ENCODE measurements at regions of chr15 and their contacts with region 1.

Region 1: GRCh38 chr15:97909291-97909891 is 51.1 kb upstream of the ARRDC4 start:
- DNase-seq: peak in 3 of 5 donors; percentile 34 to 58 (median 54)
- ATAC-seq: peak; percentile 58 to 90 (median 88)
- H3K4me3 ChIP-seq: no peak overlapping the region
- H3K27ac ChIP-seq: no peak overlapping the region
- H3K4me1 ChIP-seq: peaks cover 0 to 7% (median 0%) of the 10 kb centered on the region in 12 donors
- H3K27me3 ChIP-seq: peaks cover 0 to 42% (median 15%) of the 10 kb centered on the region in 9 donors
- CTCF ChIP-seq: peak; percentile 81 to 94 (median 90)
- POLR2A ChIP-seq: no peak

Region 2: DNA sequence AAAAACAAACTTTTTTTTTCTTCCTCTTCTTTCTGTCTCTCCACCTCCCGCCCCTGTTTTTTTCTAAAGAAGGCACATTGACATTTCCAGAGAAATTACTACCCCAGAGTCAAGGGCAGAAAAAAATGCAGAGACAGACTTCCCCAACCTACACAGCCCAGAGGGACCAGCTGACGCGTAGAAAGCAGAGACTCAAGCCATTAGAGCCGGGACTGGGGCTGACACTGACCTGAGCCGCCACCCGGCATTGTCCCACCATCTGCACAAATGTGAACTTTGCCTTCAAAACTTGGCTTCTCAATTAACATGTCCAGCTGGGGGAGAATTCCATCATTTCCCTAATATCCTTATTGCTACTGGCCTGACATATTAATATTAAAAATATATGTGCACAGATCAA is 1193.3 kb before region 1 on chr15:
- intact Hi-C with region 1: no loop called
- DNase-seq: no peak
- ATAC-seq: no peak
- H3K4me3 ChIP-seq: no peak overlapping the region
- H3K27ac ChIP-seq: no peak overlapping the region
- H3K4me1 ChIP-seq: no peaks in the 10 kb centered on the region
- H3K27me3 ChIP-seq: peaks cover 0 to 12% (median 0%) of the 10 kb centered on the region in 9 donors
- CTCF ChIP-seq: no peak
- POLR2A ChIP-seq: no peak

Region 3: DNA sequence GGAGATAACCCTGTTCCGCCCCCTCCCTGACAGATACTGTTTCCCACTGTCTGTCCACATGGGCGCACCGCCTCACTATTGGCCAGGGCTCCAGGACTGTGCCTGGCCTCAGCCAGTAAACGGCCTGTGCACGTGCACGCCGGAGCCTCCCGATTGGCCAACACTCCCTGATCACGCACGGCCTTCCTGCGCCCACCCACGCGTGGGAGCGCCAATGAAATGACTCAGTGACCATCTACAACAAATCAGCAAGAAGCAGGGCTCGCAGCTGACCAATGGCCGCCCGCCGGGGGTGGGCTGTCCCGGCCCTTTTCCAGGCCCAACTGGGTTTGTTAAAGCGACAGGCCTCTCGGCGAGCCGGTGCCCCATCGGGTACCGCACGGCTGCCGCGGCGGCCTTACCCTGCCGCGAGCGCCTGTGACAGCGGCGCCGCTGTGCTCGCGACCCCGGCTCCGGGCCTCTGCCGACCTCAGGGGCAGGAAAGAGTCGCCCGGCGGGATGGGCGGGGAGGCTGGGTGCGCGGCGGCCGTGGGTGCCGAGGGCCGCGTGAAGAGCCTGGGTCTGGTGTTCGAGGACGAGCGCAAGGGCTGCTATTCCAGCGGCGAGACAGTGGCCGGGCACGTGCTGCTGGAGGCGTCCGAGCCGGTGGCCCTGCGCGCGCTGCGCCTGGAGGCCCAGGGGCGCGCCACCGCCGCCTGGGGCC is 51.1 kb after region 1 on chr15 and contains the start of gene ARRDC4:
- intact Hi-C with region 1: loop called in 1 of 10 experiments (anchors 10 kb)
- DNase-seq: peak; percentile 100
- ATAC-seq: peak; percentile 99 to 100 (median 99)
- H3K4me3 ChIP-seq: peak within 1 kb of the TSS; percentile 64 to 99 (median 92)
- H3K27ac ChIP-seq: peak within 1 kb of the TSS; percentile 79 to 98 (median 92)
- H3K4me1 ChIP-seq: peaks cover 0 to 44% (median 24%) of the 10 kb centered on the region in 12 donors
- H3K27me3 ChIP-seq: no peaks in the 10 kb centered on the region
- CTCF ChIP-seq: no peak
- POLR2A ChIP-seq: peak; percentile 59 to 93
- total RNA-seq, gene ARRDC4: 9.7 to 49.6 (median 19.0) TPM

Region 4: DNA sequence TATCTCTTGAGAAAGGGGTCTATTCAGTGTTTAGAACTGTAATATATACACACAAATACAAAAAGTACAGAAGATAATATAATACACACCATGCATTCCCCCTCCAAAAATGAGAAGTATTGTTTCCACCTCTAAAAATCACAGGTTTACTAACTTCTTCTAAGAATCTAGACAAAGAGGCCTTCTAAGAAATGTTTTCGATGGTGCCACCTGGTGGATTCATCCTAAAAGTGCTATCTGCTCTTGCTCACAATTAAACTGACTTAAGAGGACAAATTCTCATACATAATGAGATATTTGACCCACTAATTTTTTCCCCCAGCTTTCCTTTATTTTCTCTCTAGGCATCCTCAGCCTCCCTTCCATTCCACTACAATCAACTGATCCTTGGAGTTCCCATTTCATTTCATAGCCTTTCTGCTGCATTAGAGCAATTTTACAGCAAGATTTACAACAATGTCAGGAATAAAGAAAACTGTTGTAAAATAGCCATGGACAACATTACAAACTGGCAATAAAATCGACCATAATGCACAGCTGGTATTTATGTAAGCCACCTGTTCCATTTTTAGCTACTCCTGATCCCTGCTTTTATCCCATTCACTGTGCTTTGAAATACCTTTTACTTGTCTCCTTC is 175.7 kb after region 1 on chr15:
- intact Hi-C with region 1: loop called (anchors 1 to 2 kb)
- DNase-seq: peak in 1 of 5 donors; percentile 35
- ATAC-seq: no peak
- H3K4me3 ChIP-seq: no peak overlapping the region
- H3K27ac ChIP-seq: no peak overlapping the region
- H3K4me1 ChIP-seq: no peaks in the 10 kb centered on the region
- H3K27me3 ChIP-seq: no peaks in the 10 kb centered on the region
- CTCF ChIP-seq: peak; percentile 48 to 77 (median 68)
- POLR2A ChIP-seq: no peak

Region 5: DNA sequence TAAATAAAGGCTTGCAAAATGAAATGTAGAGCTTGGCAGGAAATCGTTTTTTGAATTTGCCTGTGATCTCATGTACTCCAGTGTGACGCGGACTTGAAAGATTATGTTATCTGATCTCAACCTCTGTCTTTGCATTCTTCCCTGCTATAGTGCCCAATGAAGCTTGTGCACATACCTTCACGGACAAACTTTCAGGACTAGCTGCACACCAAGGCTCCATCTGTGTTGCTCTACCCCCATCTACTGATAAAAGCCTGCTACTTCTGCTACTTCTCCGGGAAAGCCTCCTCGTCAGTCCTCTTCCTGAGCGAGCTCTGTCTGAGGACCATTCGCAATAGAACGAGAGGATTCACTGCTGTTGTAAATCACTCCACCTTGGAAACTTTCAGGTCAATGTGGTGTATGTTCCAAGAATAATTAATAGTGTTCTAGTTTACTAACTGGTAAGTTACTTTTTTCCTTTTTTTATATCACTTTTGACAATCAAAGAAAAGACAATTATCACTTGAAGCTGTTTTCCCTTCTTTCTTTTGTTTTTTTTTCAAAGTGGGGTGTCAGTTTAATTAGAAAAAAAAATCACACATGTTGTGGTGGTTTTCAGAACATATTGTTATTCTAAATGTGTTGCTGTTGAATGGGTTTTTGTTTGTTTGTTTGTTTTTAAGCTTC is 268.7 kb after region 1 on chr15:
- intact Hi-C with region 1: loop called (anchors 2 to 5 kb)
- DNase-seq: peak in 3 of 5 donors; percentile 13 to 23 (median 22)
- ATAC-seq: peak in 3 of 4 donors; percentile 70 to 87 (median 72)
- H3K4me3 ChIP-seq: no peak overlapping the region
- H3K27ac ChIP-seq: no peak overlapping the region
- H3K4me1 ChIP-seq: no peaks in the 10 kb centered on the region
- H3K27me3 ChIP-seq: peaks cover 0 to 82% (median 19%) of the 10 kb centered on the region in 9 donors
- CTCF ChIP-seq: peak; percentile 31 to 74 (median 56)
- POLR2A ChIP-seq: no peak

Region 6: GRCh38 chr15:98292442-98293240 is 383.2 kb after region 1 on chr15:
- intact Hi-C with region 1: loop called (anchors 2 to 10 kb)
- DNase-seq: peak in 3 of 5 donors; percentile 16 to 37 (median 31)
- ATAC-seq: peak in 2 of 4 donors; percentile 40 to 69
- H3K4me3 ChIP-seq: peak overlapping the region in 6 of 12 donors; percentile 3 to 28 (median 12)
- H3K27ac ChIP-seq: no peak overlapping the region
- H3K4me1 ChIP-seq: peaks cover 0 to 9% (median 0%) of the 10 kb centered on the region in 12 donors
- H3K27me3 ChIP-seq: peaks cover 0 to 64% (median 7%) of the 10 kb centered on the region in 9 donors
- CTCF ChIP-seq: peak; percentile 25 to 62 (median 48)
- POLR2A ChIP-seq: no peak

Region 7: DNA sequence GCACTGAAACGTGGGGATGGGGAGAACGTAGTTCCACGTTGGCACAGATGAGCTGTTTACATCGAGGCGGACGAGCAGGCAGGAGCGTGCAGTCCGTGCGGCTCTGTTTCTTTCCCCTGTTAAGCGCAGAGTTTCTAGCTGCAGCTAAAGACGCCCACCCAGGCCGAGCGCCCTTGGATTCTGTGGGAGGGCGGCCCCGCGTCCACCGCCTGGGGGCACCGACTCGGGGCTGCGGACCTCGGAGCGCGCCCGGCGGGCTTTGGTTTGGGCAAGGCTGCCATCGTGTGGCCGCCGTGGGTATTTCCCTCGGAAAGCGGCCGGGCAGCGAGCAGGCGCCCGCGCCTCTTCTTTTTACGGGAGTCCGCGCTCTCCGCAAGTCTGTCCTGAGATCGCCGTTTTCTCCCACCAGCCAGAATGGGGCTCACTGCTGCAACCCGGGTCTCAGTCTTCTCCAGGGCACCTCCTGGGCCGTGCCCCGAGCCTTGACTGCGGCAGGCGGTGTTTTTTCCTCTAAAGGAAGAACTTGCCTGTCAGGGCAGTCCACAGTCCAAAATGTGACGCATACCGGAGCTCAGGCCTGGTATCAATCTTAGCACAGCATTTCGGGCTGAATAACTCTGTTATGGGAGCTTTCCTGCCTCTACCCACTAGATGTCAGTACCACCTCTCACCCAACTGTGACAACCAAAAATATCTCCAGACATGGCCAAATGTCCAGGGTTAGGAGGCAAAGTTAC is 519.0 kb after region 1 on chr15:
- intact Hi-C with region 1: loop called in 5 of 10 experiments (anchors 5 to 10 kb)
- DNase-seq: peak; percentile 56 to 83 (median 67)
- ATAC-seq: peak; percentile 11 to 88 (median 77)
- H3K4me3 ChIP-seq: peak overlapping the region in 11 of 12 donors; percentile 19 to 53 (median 39)
- H3K27ac ChIP-seq: peak overlapping the region in 2 of 12 donors; percentile 8 to 65
- H3K4me1 ChIP-seq: peaks cover 0 to 9% (median 0%) of the 10 kb centered on the region in 12 donors
- H3K27me3 ChIP-seq: peaks cover 0 to 48% (median 13%) of the 10 kb centered on the region in 9 donors
- CTCF ChIP-seq: peak; percentile 72 to 91 (median 85)
- POLR2A ChIP-seq: no peak

Measured in heart left ventricle (tissue), 16 donors.